ENCODE measurements at regions of chr17 and their contacts with region 1.

Region 1: GRCh38 chr17:74736513-74737298 is at the start of gene RAB37:
- DNase-seq: peak; percentile 89 to 97 (median 95)
- H3K4me3 ChIP-seq: peak within 1 kb of the TSS; percentile 61 to 88 (median 70)
- H3K27ac ChIP-seq: peak within 1 kb of the TSS; percentile 81 to 89
- H3K4me1 ChIP-seq: peaks cover 6 to 61% (median 55%) of the 10 kb centered on the region in 4 experiments
- H3K27me3 ChIP-seq: no peaks in the 10 kb centered on the region

Region 2: GRCh38 chr17:74558882-74559519 is 177.7 kb before region 1 on chr17:
- CTCF ChIA-PET with region 1: no interaction called
- POLR2A ChIA-PET with region 1: no interaction called
- DNase-seq: peak in 1 of 3 donors; percentile 23
- H3K4me3 ChIP-seq: no peak overlapping the region
- H3K27ac ChIP-seq: no peak overlapping the region
- H3K4me1 ChIP-seq: peaks cover 0 to 6% (median 2%) of the 10 kb centered on the region in 4 experiments
- H3K27me3 ChIP-seq: no peaks in the 10 kb centered on the region

Region 3: DNA sequence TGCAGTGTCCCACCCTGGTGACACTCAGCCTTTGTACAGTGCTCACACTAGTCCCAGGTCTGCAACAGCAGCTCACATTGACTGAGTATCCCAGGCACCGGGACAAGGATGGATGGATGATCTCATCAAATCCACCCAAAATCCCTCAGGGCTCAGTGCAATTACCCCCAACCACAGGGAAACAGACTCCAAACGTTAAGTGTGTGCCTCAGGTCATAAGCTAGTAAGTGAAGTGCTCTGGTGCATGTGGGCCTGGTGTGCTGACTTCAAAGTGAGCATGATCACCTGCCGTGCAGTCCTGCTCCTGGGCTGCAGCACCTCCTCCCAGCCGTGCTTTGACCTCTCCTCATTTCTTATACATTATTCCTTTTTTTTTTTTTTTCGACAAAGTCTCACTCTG is 82.0 kb before region 1 on chr17:
- CTCF ChIA-PET with region 1: interaction called, 151 read pairs
- POLR2A ChIA-PET with region 1: interaction called, 23 read pairs
- DNase-seq: no peak
- H3K4me3 ChIP-seq: no peak overlapping the region
- H3K27ac ChIP-seq: no peak overlapping the region
- H3K4me1 ChIP-seq: peaks cover 0 to 6% (median 3%) of the 10 kb centered on the region in 4 experiments
- H3K27me3 ChIP-seq: peaks cover 0 to 9% (median 4%) of the 10 kb centered on the region in 5 experiments

Region 4: DNA sequence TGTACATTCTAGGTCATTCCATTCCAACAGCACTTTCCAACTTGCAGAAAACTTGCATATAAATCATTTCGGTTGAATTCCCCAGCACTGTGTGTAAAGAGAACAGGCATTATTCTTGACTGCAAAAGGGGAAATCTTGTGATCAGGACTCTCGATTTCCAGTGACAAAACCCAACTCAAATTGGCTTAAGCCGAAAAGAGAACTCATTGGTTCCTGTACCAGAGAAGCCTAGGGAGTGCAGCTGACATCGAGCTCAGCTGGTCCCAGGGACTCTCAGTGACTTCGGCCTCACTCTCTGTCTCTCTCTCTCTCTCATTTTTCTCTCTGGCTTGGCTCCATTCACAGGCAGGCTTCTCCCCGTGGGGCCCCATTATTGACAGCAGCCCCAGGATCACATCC is 54.7 kb before region 1 on chr17:
- CTCF ChIA-PET with region 1: interaction called, 61 read pairs
- POLR2A ChIA-PET with region 1: interaction called, 3 read pairs
- DNase-seq: no peak
- H3K4me3 ChIP-seq: no peak overlapping the region
- H3K27ac ChIP-seq: no peak overlapping the region
- H3K4me1 ChIP-seq: peaks cover 2 to 18% (median 16%) of the 10 kb centered on the region in 4 experiments
- H3K27me3 ChIP-seq: no peaks in the 10 kb centered on the region

Region 5: DNA sequence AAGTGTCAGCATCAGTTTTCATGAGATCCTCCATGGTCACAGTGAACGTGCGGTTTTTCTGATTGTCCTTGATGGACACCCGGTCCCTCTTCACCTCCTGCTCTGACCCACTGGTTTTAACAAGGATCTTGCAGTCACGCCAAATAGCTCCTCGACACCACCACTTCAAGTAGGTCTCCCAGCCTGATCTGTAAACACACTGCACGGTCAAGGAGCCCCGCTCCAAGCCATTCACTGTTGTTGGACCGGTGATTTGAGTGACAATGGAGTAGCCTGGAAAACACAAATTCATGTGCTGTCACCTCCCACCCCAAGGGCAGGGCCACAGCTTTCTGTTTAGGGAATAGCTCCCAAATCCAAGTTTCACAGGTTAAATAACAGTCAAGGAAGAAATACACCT is 32.2 kb before region 1 on chr17:
- CTCF ChIA-PET with region 1: interaction called, 39 read pairs
- POLR2A ChIA-PET with region 1: no interaction called
- DNase-seq: no peak
- H3K4me3 ChIP-seq: no peak overlapping the region
- H3K27ac ChIP-seq: no peak overlapping the region
- H3K4me1 ChIP-seq: peaks cover 0 to 4% (median under 1%) of the 10 kb centered on the region in 4 experiments
- H3K27me3 ChIP-seq: no peaks in the 10 kb centered on the region

Region 6: GRCh38 chr17:74748529-74749365 is 12.0 kb after region 1 on chr17 and contains the start of gene NHERF1:
- CTCF ChIA-PET with region 1: interaction called, 32 read pairs
- POLR2A ChIA-PET with region 1: interaction called, 36 read pairs
- DNase-seq: peak; percentile 90 to 94 (median 94)
- H3K4me3 ChIP-seq: peak within 1 kb of the TSS; percentile 81 to 98 (median 96)
- H3K27ac ChIP-seq: peak within 1 kb of the TSS; percentile 54 to 81
- H3K4me1 ChIP-seq: peaks cover 18 to 84% (median 80%) of the 10 kb centered on the region in 4 experiments
- H3K27me3 ChIP-seq: no peaks in the 10 kb centered on the region

Region 7: DNA sequence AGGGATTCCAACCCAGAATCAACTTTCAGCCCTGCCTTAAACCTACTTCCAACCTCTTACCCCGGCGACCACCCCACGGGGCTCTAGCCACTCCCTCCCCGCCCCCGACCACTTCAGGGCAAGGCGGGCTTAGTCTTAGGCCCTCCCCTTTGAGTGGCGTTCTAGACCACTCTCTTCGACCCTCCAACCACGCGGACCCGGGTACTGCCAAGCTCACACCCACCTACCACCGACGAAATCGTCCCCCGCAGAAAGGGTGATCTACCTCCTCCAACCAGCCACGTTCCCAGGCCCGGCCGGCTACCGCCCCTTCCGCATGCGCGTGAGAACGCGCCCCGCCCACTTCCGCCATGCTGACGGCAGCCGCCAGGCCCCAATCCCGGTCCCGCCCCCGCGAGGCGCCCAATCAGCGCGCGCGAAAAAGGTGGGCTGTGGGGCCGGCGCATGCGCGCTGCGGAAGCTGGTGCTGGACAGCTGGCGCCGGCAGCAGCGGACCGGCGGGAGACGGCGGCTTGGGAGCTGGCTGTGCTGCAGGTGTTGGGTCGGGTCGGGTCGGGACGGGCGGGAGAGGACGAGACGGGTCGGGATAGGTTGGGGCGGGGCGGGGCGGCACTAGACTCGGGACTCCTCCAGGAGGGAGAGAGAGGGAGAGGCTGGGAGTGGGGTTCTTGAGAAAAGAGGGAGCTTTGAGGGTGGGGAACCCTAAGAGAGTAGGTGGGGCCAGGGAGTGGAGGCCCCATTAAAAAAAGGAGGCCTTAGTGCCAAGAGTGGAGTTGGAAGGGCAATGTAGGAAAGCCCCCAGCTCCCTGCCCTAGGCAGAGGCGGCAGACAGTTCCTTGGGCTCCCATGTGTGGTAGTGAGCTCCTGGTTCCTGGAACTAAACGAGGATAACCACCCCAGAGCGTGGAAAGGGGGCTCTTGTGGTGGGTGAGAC is 39.6 kb after region 1 on chr17 and contains the start of gene NAT9:
- CTCF ChIA-PET with region 1: interaction called, 38 read pairs
- POLR2A ChIA-PET with region 1: interaction called, 13 read pairs
- DNase-seq: peak; percentile 95 to 98 (median 97)
- H3K4me3 ChIP-seq: peak within 1 kb of the TSS; percentile 38 to 96 (median 82)
- H3K27ac ChIP-seq: peak within 1 kb of the TSS; percentile 73 to 86
- H3K4me1 ChIP-seq: peaks cover 20 to 56% (median 45%) of the 10 kb centered on the region in 4 experiments
- H3K27me3 ChIP-seq: no peaks in the 10 kb centered on the region

Measured in common myeloid progenitor, CD34-positive (primary cell).